ENCODE measurements at regions of chr15 and their contacts with region 1.

Region 1: DNA sequence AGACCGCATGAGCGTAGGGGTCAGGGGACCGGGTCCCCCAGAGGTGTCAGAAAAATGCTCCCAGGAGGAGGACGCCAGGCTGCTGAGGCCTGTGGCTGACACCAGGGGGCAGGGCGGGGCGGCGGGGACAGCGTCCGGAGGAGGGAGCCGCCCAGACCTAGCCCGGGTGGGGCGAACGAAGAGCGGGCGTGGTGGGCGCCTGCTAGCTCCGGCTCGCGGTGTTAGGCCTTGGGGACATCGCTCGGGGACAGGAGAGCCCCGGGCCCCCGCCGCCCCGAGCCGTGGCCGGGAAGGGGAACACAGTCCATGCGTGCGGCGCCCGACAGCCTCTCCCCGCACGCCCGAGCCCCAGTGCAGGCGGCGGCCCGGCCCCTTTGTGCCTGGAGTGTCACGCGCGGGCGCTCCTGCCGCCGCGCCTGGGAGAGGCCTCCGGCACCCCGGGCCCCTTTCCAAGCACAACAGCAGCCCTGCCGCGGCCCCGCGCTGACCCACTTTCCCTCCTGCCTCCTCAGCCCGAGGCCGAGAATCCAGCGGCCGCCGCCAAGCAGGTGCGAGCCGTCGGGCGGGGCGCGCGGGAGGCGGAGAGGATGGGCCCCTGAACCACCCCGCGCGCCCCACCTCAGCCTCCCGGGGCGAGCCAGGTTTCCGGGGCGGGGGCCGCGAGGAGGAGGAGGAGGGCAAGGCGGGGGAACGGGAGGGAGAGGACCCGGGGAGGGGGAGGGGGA is 111.0 kb upstream of the KLF13 start:
- DNase-seq: no peak
- H3K4me3 ChIP-seq: peak overlapping the region; percentile 46
- H3K27ac ChIP-seq: no peak overlapping the region
- H3K27me3 ChIP-seq: peaks cover 18% of the 10 kb centered on the region
- CTCF ChIP-seq: peak; percentile 72

Region 2: DNA sequence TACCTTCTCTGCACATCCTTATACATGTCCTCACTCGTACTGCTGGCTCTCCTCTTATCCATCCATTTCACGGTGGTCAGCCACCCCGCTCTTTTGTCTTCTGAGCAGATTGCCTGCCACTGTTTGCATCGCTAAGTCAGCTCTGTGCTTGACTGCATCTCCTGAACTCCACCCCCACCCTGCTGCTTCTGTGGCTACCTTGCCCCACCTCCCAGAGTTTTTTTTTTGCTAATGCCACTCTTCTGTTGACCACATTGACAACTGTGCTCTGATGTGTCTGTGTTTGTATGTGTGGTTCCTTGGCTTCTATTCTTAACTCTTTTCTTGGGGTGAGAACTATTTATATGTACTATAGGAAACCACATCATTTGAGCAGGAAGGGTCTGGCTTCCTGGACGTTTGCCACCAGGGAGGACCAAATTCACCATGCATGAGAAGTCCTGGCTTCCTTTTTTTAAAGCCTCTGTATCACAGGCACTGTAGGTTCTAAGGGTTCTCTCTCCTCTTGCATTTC is 211.4 kb before region 1 on chr15:
- CTCF ChIA-PET with region 1: no interaction called
- POLR2A ChIA-PET with region 1: no interaction called
- DNase-seq: no peak
- H3K4me3 ChIP-seq: no peak overlapping the region
- H3K27ac ChIP-seq: no peak overlapping the region
- H3K27me3 ChIP-seq: peaks cover 4% of the 10 kb centered on the region
- CTCF ChIP-seq: no peak

Region 3: GRCh38 chr15:31510057-31510456 is 294.4 kb after region 1 on chr15:
- CTCF ChIA-PET with region 1: interaction called, 11 read pairs
- POLR2A ChIA-PET with region 1: no interaction called
- DNase-seq: no peak
- H3K4me3 ChIP-seq: no peak overlapping the region
- H3K27ac ChIP-seq: no peak overlapping the region
- H3K27me3 ChIP-seq: no peaks in the 10 kb centered on the region
- CTCF ChIP-seq: no peak